CD4-positive, alpha-beta memory T cell (primary cell): ENCODE measurements at regions of chr5 and their contacts with region 1.

Region 1: DNA sequence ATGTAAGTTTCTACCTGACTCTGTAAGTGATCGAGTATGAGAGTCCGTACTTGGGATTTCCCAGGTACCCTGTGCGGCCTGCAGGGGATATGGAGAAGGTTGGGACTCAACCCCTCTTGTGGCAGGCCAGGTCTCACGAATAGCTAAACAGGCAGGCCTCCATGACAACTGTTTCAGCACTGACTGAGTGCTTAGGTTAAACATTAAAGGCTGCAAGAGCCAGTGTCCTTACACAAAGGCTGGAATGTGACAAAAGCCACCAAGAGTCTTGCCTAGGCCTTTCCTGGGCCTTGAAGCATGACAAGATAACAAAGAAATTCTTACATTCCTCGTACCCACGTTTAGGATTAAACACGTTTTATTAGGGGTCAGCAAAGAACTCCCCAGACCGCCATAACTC is 58.6 kb downstream of the THBS4 start:
- DNase-seq: no peak
- H3K4me3 ChIP-seq: no peak overlapping the region
- H3K4me3 Mint-ChIP-seq: peak overlapping the region in 1 of 8 donors; percentile 34
- H3K27ac ChIP-seq: no peak overlapping the region
- H3K27ac Mint-ChIP-seq: peak overlapping the region; percentile 31 to 90 (median 87)
- H3K4me1 ChIP-seq: peaks cover 30% of the 10 kb centered on the region
- H3K4me1 Mint-ChIP-seq: peaks cover 20 to 47% (median 33%) of the 10 kb centered on the region in 4 donors
- H3K27me3 ChIP-seq: no peaks in the 10 kb centered on the region
- H3K27me3 Mint-ChIP-seq: no peaks in the 10 kb centered on the region

Region 2: DNA sequence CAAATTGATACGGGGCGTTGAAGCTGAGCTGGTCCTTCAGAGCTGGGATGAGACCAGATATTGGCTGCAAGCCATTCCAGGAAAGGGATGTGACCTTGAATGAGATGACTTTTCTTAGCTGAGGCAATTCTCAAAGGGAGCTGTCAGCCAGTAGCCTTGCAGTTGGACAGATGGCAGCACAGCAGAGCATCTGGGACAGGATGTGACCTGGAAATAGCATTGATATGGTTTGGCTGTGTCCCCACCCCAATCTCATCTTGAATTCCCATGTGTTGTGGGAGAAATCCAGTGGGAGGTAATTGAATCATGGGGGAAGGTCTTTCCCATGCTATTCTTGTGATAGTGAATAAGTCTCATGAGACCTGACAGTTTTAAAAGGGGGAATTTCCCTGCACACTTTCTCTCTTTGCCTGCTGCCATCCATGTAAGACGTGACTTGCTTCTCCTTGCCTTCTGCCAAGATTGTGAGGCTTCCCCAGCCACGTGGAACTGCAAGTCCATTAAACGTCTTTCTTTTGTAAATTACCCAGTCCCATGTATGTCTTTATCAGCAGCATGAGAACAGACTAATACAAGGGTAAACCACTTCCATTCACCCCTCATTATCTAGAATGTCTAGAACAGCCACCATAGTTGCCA is 82.9 kb before region 1 on chr5:
- CTCF ChIA-PET with region 1: no interaction called
- POLR2A ChIA-PET with region 1: no interaction called
- intact Hi-C with region 1: no loop called
- DNase-seq: no peak
- H3K4me3 ChIP-seq: no peak overlapping the region
- H3K4me3 Mint-ChIP-seq: no peak overlapping the region
- H3K27ac ChIP-seq: no peak overlapping the region
- H3K27ac Mint-ChIP-seq: no peak overlapping the region
- H3K4me1 ChIP-seq: no peaks in the 10 kb centered on the region
- H3K4me1 Mint-ChIP-seq: no peaks in the 10 kb centered on the region
- H3K27me3 ChIP-seq: no peaks in the 10 kb centered on the region
- H3K27me3 Mint-ChIP-seq: no peaks in the 10 kb centered on the region

Region 3: DNA sequence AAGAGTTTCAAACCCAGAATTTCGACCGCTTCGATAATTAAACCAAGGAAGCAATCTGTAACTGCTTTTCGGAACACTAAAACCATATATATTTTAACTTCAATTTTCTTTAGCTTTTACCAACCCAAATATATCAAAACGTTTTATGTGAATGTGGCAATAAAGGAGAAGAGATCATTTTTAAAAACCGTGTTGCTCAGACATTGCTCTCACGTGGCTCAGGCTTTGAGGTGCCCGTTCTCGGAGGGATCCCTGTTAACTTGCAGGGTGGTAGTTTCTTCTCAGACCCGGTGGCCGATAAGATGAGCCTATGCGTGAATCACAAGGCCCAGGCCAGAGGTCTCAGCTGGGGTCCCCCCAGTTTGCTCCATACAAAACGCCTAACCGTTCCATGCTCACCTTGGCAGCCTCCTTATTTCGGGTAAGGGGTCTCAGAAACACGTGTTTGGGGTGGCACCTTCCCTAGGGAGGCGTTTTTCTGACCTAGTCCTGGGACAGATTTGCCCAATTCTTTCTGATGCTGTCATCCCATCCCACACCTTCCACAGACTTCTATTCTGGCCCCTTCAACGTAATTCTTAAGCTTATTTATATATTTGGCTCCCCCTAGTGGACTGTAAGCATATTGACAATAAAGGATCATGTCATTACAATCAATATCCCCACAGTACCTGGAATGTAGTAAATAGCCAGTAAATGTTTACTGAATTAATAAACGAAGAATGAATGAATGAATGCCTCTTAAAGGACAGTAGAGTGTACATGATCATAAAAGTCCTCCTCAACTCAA is 10.5 kb before region 1 on chr5:
- CTCF ChIA-PET with region 1: interaction called, 25 read pairs
- POLR2A ChIA-PET with region 1: interaction called, 3 read pairs
- intact Hi-C with region 1: no loop called
- DNase-seq: peak in 4 of 5 donors; percentile 50 to 58 (median 54)
- H3K4me3 ChIP-seq: peak overlapping the region in 1 of 2 donors; percentile 34
- H3K4me3 Mint-ChIP-seq: peak overlapping the region; percentile 73 to 88 (median 86)
- H3K27ac ChIP-seq: no peak overlapping the region
- H3K27ac Mint-ChIP-seq: peak overlapping the region; percentile 16 to 92 (median 81)
- H3K4me1 ChIP-seq: peaks cover 11% of the 10 kb centered on the region
- H3K4me1 Mint-ChIP-seq: peaks cover 5 to 15% (median 7%) of the 10 kb centered on the region in 4 donors
- H3K27me3 ChIP-seq: no peaks in the 10 kb centered on the region
- H3K27me3 Mint-ChIP-seq: no peaks in the 10 kb centered on the region

Region 4: DNA sequence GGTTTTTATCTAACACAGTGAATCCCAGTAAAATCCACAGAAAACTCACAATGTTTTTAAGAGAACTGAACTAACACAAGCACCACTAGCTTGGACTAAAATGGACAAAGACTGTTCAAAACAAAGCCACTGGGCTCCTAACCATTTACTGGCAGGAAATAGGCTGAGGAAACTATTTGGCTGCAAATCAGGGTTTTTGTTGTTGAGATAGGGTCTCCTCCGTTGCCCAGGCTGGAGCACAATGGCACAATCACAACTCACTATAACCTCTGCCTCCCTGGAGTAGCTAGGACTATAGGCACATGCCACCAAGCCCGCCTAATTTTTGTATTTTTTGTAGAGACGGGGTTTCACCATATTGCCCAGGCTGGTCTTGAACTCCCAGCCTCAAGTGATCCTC is 41.1 kb after region 1 on chr5:
- CTCF ChIA-PET with region 1: interaction called, 22 read pairs
- POLR2A ChIA-PET with region 1: interaction called, 11 read pairs
- intact Hi-C with region 1: no loop called
- DNase-seq: no peak
- H3K4me3 ChIP-seq: no peak overlapping the region
- H3K4me3 Mint-ChIP-seq: peak overlapping the region; percentile 7 to 87 (median 77)
- H3K27ac ChIP-seq: peak overlapping the region; percentile 54
- H3K27ac Mint-ChIP-seq: peak overlapping the region; percentile 69 to 97 (median 92)
- H3K4me1 ChIP-seq: peaks cover 86% of the 10 kb centered on the region
- H3K4me1 Mint-ChIP-seq: peaks cover 70 to 88% (median 80%) of the 10 kb centered on the region in 4 donors
- H3K27me3 ChIP-seq: no peaks in the 10 kb centered on the region
- H3K27me3 Mint-ChIP-seq: no peaks in the 10 kb centered on the region

Region 5: DNA sequence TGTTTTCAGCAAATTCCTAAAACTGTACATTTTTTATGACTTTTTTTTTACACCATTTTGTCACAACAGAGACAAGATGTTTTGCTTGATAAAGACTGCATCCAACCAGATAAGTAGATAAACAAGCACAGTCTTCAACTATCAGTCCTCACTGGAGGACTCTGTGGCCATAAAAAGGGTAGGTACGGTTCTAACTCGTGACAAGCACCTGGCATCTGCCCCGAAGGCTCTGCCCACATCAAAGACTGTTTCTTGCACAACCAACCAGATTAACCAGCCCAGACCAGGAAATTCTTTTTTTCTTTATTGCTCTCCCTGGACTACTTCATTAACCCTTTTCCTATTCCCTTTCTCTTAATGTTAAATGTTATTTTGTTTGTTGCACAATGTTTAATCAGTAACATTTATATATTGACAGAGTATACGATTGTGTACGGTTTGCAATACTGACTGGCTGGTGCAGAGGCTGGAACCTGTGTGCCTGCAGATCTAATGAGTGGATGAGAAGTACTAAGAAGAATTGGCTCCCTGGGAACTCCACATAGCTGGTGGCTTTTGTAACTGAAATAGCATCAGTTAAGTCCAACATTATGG is 87.9 kb after region 1 on chr5:
- CTCF ChIA-PET with region 1: interaction called, 6 read pairs
- POLR2A ChIA-PET with region 1: interaction called, 8 read pairs
- intact Hi-C with region 1: loop called (anchors 5 kb)
- DNase-seq: peak; percentile 79 to 84 (median 81)
- H3K4me3 ChIP-seq: peak overlapping the region in 1 of 2 donors; percentile 5
- H3K4me3 Mint-ChIP-seq: peak overlapping the region; percentile 28 to 76 (median 69)
- H3K27ac ChIP-seq: peak overlapping the region; percentile 48
- H3K27ac Mint-ChIP-seq: peak overlapping the region; percentile 89 to 97 (median 95)
- H3K4me1 ChIP-seq: peaks cover 97% of the 10 kb centered on the region
- H3K4me1 Mint-ChIP-seq: peaks cover 67 to 91% (median 84%) of the 10 kb centered on the region in 4 donors
- H3K27me3 ChIP-seq: no peaks in the 10 kb centered on the region
- H3K27me3 Mint-ChIP-seq: no peaks in the 10 kb centered on the region

Region 6: DNA sequence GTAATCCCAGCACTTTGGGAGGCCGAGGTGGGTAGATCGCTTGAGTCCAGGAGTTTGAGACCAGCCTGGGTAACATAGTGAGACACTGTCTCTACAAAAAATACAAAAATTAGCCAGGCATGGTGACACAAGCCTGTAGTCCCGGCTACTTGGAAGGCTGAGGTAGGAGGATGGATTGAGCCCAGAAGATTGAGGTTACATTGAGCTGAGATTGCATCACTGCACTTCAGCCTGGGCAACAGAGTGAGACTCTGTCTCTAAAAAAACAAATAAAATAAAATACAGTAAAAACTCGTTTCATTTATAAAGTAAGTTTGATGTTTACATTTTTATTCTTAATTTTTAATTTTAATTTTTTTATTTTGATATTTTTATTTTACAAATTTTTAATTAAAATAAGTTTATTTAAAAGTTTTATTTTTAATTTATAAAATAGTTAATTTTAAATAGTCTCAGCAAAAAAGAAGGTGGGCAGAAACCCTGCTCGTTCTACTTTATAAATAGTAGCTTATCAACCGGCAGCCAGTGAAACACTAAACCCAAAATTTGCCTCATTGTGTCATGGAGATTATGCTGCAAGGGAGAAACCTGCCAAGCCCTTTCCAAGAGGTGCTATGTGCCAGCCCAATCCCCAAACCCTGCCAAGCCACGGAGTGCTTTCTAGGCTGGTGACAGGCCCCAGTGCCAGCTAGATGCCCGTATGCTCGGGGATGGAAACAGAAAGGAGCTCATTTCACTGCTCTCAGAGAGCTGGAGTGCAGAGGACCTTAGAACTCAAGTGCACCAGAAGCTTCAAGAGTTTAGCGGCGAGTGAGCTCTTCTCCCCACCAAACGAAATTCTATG is 123.2 kb after region 1 on chr5:
- CTCF ChIA-PET with region 1: interaction called, 10 read pairs
- POLR2A ChIA-PET with region 1: no interaction called
- intact Hi-C with region 1: no loop called
- DNase-seq: peak in 1 of 5 donors; percentile 55
- H3K4me3 ChIP-seq: peak overlapping the region in 1 of 2 donors; percentile 25
- H3K4me3 Mint-ChIP-seq: peak overlapping the region in 7 of 8 donors; percentile 46 to 96 (median 81)
- H3K27ac ChIP-seq: peak overlapping the region; percentile 37
- H3K27ac Mint-ChIP-seq: peak overlapping the region; percentile 31 to 99 (median 93)
- H3K4me1 ChIP-seq: peaks cover 98% of the 10 kb centered on the region
- H3K4me1 Mint-ChIP-seq: peaks cover 75 to 97% (median 86%) of the 10 kb centered on the region in 4 donors
- H3K27me3 ChIP-seq: no peaks in the 10 kb centered on the region
- H3K27me3 Mint-ChIP-seq: no peaks in the 10 kb centered on the region

Region 7: DNA sequence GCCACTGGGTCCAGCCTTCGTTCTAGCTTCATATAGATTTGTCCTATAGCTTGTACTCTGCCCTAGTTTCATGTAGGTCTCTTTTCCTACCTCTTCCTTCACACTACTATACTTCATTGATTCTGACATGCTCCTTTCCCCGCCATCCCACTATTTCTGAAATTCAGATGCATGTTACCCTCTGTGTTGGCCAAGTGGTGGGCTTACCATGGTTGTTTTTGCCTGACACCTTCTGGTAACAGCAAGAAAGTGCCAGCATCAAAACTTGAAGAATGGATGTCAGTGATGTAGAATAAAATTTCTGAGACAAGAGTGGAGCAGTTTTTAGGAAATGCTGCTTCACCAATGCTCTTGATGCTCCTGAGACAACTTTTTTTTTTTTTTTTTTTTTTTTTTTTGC is 181.6 kb after region 1 on chr5:
- CTCF ChIA-PET with region 1: interaction called, 144 read pairs
- POLR2A ChIA-PET with region 1: interaction called, 9 read pairs
- intact Hi-C with region 1: loop called (anchors 1 kb)
- DNase-seq: peak in 4 of 5 donors; percentile 28 to 39 (median 35)
- H3K4me3 ChIP-seq: no peak overlapping the region
- H3K4me3 Mint-ChIP-seq: no peak overlapping the region
- H3K27ac ChIP-seq: no peak overlapping the region
- H3K27ac Mint-ChIP-seq: peak overlapping the region in 2 of 7 donors; percentile 18 to 75
- H3K4me1 ChIP-seq: peaks cover 14% of the 10 kb centered on the region
- H3K4me1 Mint-ChIP-seq: peaks cover 11 to 31% (median 19%) of the 10 kb centered on the region in 4 donors
- H3K27me3 ChIP-seq: no peaks in the 10 kb centered on the region
- H3K27me3 Mint-ChIP-seq: no peaks in the 10 kb centered on the region

Region 8: GRCh38 chr5:80672140-80672736 is 578.4 kb after region 1 on chr5:
- CTCF ChIA-PET with region 1: interaction called, 9 read pairs
- POLR2A ChIA-PET with region 1: no interaction called
- intact Hi-C with region 1: loop called (anchors 1 kb)
- DNase-seq: peak; percentile 51 to 63 (median 53)
- H3K4me3 ChIP-seq: no peak overlapping the region
- H3K4me3 Mint-ChIP-seq: no peak overlapping the region
- H3K27ac ChIP-seq: no peak overlapping the region
- H3K27ac Mint-ChIP-seq: no peak overlapping the region
- H3K4me1 ChIP-seq: no peaks in the 10 kb centered on the region
- H3K4me1 Mint-ChIP-seq: peaks cover 0 to 10% (median 5%) of the 10 kb centered on the region in 4 donors
- H3K27me3 ChIP-seq: no peaks in the 10 kb centered on the region
- H3K27me3 Mint-ChIP-seq: no peaks in the 10 kb centered on the region

Region 9: GRCh38 chr5:80822640-80823039 is 728.8 kb after region 1 on chr5:
- CTCF ChIA-PET with region 1: no interaction called
- POLR2A ChIA-PET with region 1: no interaction called
- intact Hi-C with region 1: no loop called
- DNase-seq: no peak
- H3K4me3 ChIP-seq: no peak overlapping the region
- H3K4me3 Mint-ChIP-seq: no peak overlapping the region
- H3K27ac ChIP-seq: no peak overlapping the region
- H3K27ac Mint-ChIP-seq: no peak overlapping the region
- H3K4me1 ChIP-seq: no peaks in the 10 kb centered on the region
- H3K4me1 Mint-ChIP-seq: no peaks in the 10 kb centered on the region
- H3K27me3 ChIP-seq: no peaks in the 10 kb centered on the region
- H3K27me3 Mint-ChIP-seq: no peaks in the 10 kb centered on the region